A549 (cell line): ENCODE measurements at regions of chr2 and their contacts with region 1.

Region 1: GRCh38 chr2:70861777-70862625 is 26.4 kb upstream of the CD207 start:
- DNase-seq: peak; percentile 85 to 92
- ATAC-seq: peak; percentile 90 to 97
- H3K4me3 ChIP-seq: no peak overlapping the region
- H3K27ac ChIP-seq: no peak overlapping the region
- H3K4me1 ChIP-seq: peaks cover 3% of the 10 kb centered on the region; the same call in 1 of the 3 replicates
- CTCF ChIP-seq: peak; percentile 98
- EP300 ChIP-seq: no peak
- POLR2A ChIP-seq: no peak
- RAD21 ChIP-seq: peak; percentile 91 to 95

Region 2: GRCh38 chr2:70733646-70734180 is 128.3 kb before region 1 on chr2:
- CTCF ChIA-PET with region 1: no interaction called
- POLR2A ChIA-PET with region 1: no interaction called
- DNase-seq: no peak
- ATAC-seq: no peak
- H3K4me3 ChIP-seq: no peak overlapping the region
- H3K27ac ChIP-seq: no peak overlapping the region
- H3K4me1 ChIP-seq: no peaks in the 10 kb centered on the region
- CTCF ChIP-seq: no peak
- EP300 ChIP-seq: no peak
- POLR2A ChIP-seq: no peak
- RAD21 ChIP-seq: no peak

Region 3: DNA sequence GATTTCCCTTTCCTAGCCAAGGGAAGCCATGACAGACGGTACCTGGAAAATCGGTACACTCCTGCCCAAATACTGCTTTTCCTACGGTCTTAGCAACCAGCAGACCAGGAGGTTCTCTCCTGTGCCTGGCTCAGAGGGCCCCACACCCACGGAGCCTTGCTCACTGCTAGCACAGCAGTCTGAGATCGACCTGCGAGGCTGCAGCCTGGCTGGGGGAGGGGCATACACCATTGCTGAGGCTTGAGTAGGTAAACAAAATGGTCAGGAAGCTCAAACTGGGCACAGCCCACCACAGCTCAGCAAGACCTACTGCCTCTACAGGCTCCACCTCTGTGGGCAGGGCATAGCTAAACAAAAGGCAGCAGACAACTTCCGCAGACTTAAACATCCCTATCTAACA is 19.6 kb before region 1 on chr2:
- CTCF ChIA-PET with region 1: interaction called, 11 read pairs
- POLR2A ChIA-PET with region 1: no interaction called
- DNase-seq: no peak
- ATAC-seq: no peak
- H3K4me3 ChIP-seq: no peak overlapping the region
- H3K27ac ChIP-seq: no peak overlapping the region
- H3K4me1 ChIP-seq: no peaks in the 10 kb centered on the region
- CTCF ChIP-seq: no peak
- EP300 ChIP-seq: no peak
- POLR2A ChIP-seq: no peak
- RAD21 ChIP-seq: no peak

Region 4: GRCh38 chr2:70919672-70920366 is 57.8 kb after region 1 on chr2:
- CTCF ChIA-PET with region 1: interaction called, 73 read pairs
- POLR2A ChIA-PET with region 1: no interaction called
- DNase-seq: peak; percentile 77 to 87
- ATAC-seq: peak; percentile 90 to 95
- H3K4me3 ChIP-seq: no peak overlapping the region
- H3K27ac ChIP-seq: no peak overlapping the region
- H3K4me1 ChIP-seq: no peaks in the 10 kb centered on the region
- CTCF ChIP-seq: peak; percentile 97
- EP300 ChIP-seq: no peak
- POLR2A ChIP-seq: no peak
- RAD21 ChIP-seq: peak; percentile 81 to 89

Region 5: DNA sequence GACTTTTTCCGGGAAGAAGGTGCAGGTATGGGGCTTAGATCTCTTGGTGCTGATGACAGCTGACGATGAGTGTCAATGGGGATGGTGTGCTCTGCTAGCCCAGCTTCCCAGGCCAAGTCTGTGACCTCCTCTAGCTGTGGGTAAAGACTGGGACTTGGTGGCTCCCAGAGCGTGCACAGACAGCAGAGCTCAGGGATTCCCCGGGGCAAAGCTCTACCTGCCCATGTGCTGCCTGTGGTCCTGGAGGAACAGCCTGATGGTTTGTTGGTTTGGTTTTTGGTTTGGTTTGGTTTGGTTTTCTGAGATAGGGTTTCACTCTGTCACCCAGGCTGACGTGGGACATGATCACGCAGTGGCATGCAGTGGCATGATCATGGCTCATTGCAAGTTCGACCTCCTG is 92.9 kb after region 1 on chr2:
- CTCF ChIA-PET with region 1: interaction called, 72 read pairs
- POLR2A ChIA-PET with region 1: no interaction called
- DNase-seq: no peak
- ATAC-seq: no peak; a peak in 1 of 6 replicates
- H3K4me3 ChIP-seq: no peak overlapping the region
- H3K27ac ChIP-seq: no peak overlapping the region
- H3K4me1 ChIP-seq: no peaks in the 10 kb centered on the region
- CTCF ChIP-seq: no peak
- EP300 ChIP-seq: no peak
- POLR2A ChIP-seq: no peak
- RAD21 ChIP-seq: no peak

Region 6: GRCh38 chr2:70984576-70985282 is 122.7 kb after region 1 on chr2:
- CTCF ChIA-PET with region 1: interaction called, 12 read pairs
- POLR2A ChIA-PET with region 1: no interaction called
- DNase-seq: peak; percentile 67 to 79
- ATAC-seq: peak; percentile 87 to 98
- H3K4me3 ChIP-seq: no peak overlapping the region
- H3K27ac ChIP-seq: no peak overlapping the region
- H3K4me1 ChIP-seq: no peaks in the 10 kb centered on the region
- CTCF ChIP-seq: peak; percentile 67
- EP300 ChIP-seq: no peak
- POLR2A ChIP-seq: no peak
- RAD21 ChIP-seq: peak in 1 of 2 experiments; percentile 20; a peak in 1 of 5 replicates

Region 7: DNA sequence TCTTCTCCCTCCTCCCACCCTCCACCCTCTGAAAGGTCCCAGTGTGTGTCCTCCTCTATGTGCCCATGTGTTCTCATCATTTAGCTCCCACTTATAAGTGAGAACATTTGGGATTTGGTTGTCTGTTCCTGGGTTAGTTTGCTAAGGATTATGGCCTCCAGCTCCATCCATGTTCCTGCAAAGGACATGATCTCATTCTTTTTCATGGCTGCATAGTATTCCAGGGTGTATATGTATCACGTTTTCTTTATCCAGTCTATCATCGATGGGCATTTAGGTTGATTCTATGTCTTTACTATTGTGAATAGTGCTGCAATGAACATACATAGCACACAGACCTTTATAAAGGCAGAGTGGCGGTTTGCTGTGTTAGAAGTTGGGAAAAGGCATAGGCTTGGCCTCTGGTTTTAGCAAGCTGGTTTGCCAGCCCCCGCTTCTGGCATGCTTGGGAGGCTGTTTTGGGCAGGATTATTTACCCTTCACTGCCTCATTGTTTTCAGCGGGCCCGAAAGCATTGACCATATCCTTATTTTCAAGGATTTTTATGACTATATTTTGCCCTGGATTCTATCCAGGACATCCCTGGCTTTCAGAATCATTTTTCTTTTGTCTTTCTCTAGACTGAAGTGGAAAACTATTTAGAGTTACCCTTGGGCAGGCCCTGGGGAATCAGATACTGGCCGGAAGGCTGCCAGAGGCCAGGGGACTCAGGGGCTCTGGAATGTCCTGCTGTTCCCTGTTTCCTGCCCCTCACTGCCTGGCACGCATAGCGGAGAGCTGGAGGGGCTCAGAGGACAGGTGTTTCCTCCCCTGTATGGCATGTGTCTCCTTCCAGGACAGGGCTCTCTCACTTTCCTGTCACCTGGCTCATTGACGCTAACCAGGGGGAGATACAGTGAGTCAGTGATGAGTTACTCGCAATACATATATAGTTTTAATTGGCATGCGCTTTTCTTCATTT is 629.8 kb after region 1 on chr2:
- CTCF ChIA-PET with region 1: no interaction called
- POLR2A ChIA-PET with region 1: no interaction called
- DNase-seq: no peak
- ATAC-seq: no peak
- H3K4me3 ChIP-seq: no peak overlapping the region
- H3K27ac ChIP-seq: no peak overlapping the region
- H3K4me1 ChIP-seq: no peaks in the 10 kb centered on the region
- CTCF ChIP-seq: no peak
- EP300 ChIP-seq: no peak
- POLR2A ChIP-seq: no peak
- RAD21 ChIP-seq: no peak